Heart right ventricle (tissue), 16 donors: ENCODE measurements at regions of chr9 and their contacts with region 1.

Region 1: GRCh38 chr9:135410831-135411473 is 68.6 kb upstream of the PPP1R26 start:
- DNase-seq: no peak
- ATAC-seq: no peak
- H3K4me3 ChIP-seq: no peak overlapping the region
- H3K27ac ChIP-seq: no peak overlapping the region
- H3K4me1 ChIP-seq: peaks cover 0 to 5% (median 0%) of the 10 kb centered on the region in 9 donors
- H3K27me3 ChIP-seq: peaks cover 3 to 57% (median 44%) of the 10 kb centered on the region in 7 donors
- CTCF ChIP-seq: no peak

Region 2: DNA sequence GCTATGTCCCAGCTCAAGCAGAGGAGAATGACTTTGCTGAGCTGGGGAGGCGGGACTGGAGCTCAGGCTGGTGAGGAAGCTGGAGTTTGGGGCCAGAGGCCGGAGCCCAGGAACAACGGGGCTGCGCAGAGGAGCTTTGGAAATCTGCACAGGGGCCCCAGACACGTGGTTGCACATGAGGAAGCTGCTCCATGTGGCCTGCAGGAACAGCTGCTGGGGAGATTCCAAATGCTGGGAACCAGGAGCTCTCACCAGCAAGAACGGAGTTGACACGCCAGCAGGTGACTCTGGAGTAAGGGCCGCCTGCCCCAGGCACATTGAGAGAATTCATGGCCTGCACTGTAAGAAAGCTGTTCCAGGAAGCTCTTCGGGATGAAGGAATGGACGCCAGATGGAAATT is 232.5 kb before region 1 on chr9:
- intact Hi-C with region 1: no loop called
- DNase-seq: no peak
- ATAC-seq: no peak
- H3K4me3 ChIP-seq: no peak overlapping the region
- H3K27ac ChIP-seq: no peak overlapping the region
- H3K4me1 ChIP-seq: peaks cover 0 to 2% (median 0%) of the 10 kb centered on the region in 9 donors
- H3K27me3 ChIP-seq: peaks cover 0 to 67% (median 42%) of the 10 kb centered on the region in 7 donors
- CTCF ChIP-seq: no peak

Region 3: GRCh38 chr9:135343837-135344522 is 67.0 kb before region 1 on chr9:
- intact Hi-C with region 1: loop called in 2 of 10 experiments (anchors 5 kb)
- DNase-seq: peak; percentile 63 to 80
- ATAC-seq: peak; percentile 56 to 88 (median 72)
- H3K4me3 ChIP-seq: no peak overlapping the region
- H3K27ac ChIP-seq: no peak overlapping the region
- H3K4me1 ChIP-seq: peaks cover 0 to 10% (median 0%) of the 10 kb centered on the region in 9 donors
- H3K27me3 ChIP-seq: peaks cover 11 to 97% (median 59%) of the 10 kb centered on the region in 7 donors
- CTCF ChIP-seq: peak; percentile 75 to 97 (median 94)